ENCODE measurements at regions of chr4 and their contacts with region 1.

Region 1: GRCh38 chr4:53196882-53197771 is 168.7 kb downstream of the SCFD2 start:
- DNase-seq: peak in 4 of 5 donors; percentile 37 to 55 (median 52)
- H3K4me3 ChIP-seq: no peak overlapping the region
- H3K4me3 Mint-ChIP-seq: no peak overlapping the region
- H3K27ac ChIP-seq: no peak overlapping the region
- H3K27ac Mint-ChIP-seq: no peak overlapping the region
- H3K4me1 ChIP-seq: no peaks in the 10 kb centered on the region
- H3K4me1 Mint-ChIP-seq: peaks cover 0 to 2% (median 0%) of the 10 kb centered on the region in 4 donors
- H3K27me3 ChIP-seq: no peaks in the 10 kb centered on the region
- H3K27me3 Mint-ChIP-seq: no peaks in the 10 kb centered on the region

Region 2: GRCh38 chr4:52369649-52370048 is 827.5 kb before region 1 on chr4:
- CTCF ChIA-PET with region 1: no interaction called
- POLR2A ChIA-PET with region 1: no interaction called
- intact Hi-C with region 1: loop called (anchors 5 kb)
- DNase-seq: no peak
- H3K4me3 ChIP-seq: no peak overlapping the region
- H3K4me3 Mint-ChIP-seq: no peak overlapping the region
- H3K27ac ChIP-seq: no peak overlapping the region
- H3K27ac Mint-ChIP-seq: no peak overlapping the region
- H3K4me1 ChIP-seq: no peaks in the 10 kb centered on the region
- H3K4me1 Mint-ChIP-seq: no peaks in the 10 kb centered on the region
- H3K27me3 ChIP-seq: no peaks in the 10 kb centered on the region
- H3K27me3 Mint-ChIP-seq: no peaks in the 10 kb centered on the region

Region 3: DNA sequence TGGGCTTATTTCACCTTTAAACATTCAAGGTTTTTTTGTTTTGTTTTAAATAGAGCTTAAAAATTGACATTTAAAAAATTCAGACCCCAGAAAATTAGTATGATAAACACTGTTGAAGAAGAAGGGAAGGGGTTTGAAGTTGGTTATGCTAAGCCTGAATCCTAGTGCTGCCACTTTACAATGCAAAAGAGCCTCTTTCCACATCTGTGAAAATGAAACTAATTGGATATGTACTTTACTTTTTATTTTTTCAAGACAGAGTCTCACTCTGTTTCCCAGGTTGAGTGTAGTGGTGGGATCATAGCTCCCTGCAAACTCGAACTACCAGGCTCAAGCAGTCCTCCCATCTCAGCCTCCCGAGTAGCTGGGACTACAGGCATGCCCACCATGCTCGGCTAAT is 222.1 kb after region 1 on chr4:
- CTCF ChIA-PET with region 1: no interaction called
- POLR2A ChIA-PET with region 1: no interaction called
- intact Hi-C with region 1: loop called (anchors 10 kb)
- DNase-seq: no peak
- H3K4me3 ChIP-seq: no peak overlapping the region
- H3K4me3 Mint-ChIP-seq: no peak overlapping the region
- H3K27ac ChIP-seq: no peak overlapping the region
- H3K27ac Mint-ChIP-seq: peak overlapping the region in 1 of 7 donors; percentile 35
- H3K4me1 ChIP-seq: no peaks in the 10 kb centered on the region
- H3K4me1 Mint-ChIP-seq: peaks cover 4 to 16% (median 12%) of the 10 kb centered on the region in 4 donors
- H3K27me3 ChIP-seq: no peaks in the 10 kb centered on the region
- H3K27me3 Mint-ChIP-seq: no peaks in the 10 kb centered on the region